CD8-positive, alpha-beta memory T cell (primary cell): ENCODE measurements at regions of chr14 and their contacts with region 1.

Region 1: DNA sequence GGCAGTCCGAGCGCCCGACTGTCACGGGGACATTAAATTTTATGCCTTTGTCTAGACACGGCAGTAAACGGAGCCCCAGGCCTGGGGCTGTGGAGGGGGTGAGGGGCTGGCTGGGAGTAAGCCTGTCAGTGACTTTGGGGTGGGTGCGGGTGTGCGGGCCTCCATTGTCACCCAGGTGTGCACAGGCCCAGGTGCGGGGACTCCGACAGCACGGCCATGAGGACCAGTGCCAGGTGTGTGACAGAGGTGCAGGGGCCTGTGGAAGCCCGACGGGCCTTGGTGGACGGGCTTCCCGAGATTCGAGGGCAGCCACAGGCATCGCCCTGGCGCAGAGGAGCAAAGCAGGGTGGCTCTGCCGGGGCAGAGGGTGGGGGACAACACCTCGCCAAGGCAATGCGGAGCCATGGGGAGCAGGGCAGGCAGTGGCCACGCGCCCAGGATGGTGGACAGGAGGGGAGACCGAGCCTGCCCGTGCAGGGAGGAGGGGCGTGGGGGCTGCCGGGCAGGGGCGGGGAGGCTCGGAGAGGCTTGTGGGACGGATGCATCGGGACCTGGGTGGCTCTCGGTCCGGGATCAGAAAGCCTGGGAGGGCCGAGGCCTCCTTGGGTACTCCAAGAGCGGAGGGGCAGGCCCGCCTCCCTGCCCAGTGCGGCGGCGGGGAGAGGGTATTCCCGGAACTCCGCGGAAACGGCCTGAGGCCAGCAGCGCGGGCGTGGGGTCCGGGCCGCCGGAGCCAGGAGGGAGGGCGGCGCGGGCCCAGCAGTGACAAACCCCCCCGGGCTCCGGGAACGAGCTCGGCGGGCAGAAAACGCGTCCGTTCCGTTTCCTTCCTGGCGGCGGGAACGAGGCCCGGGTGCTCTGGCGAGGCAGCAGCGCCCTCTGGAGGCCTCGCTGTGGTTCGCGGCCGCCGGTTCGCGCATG is 1.5 kb downstream of the TMEM121 start:
- DNase-seq: peak; percentile 71 to 83 (median 73)
- H3K4me3 ChIP-seq: peak overlapping the region; percentile 32
- H3K4me3 Mint-ChIP-seq: peak overlapping the region; percentile 56 to 82 (median 69)
- H3K27ac ChIP-seq: no peak overlapping the region
- H3K27ac Mint-ChIP-seq: peak overlapping the region in 1 of 8 donors; percentile 60
- H3K4me1 ChIP-seq: peaks cover 26% of the 10 kb centered on the region
- H3K4me1 Mint-ChIP-seq: peaks cover 4 to 38% (median 7%) of the 10 kb centered on the region in 3 donors
- H3K27me3 ChIP-seq: peaks cover 17% of the 10 kb centered on the region
- H3K27me3 Mint-ChIP-seq: peaks cover 15 to 18% of the 10 kb centered on the region in 2 donors

Region 2: DNA sequence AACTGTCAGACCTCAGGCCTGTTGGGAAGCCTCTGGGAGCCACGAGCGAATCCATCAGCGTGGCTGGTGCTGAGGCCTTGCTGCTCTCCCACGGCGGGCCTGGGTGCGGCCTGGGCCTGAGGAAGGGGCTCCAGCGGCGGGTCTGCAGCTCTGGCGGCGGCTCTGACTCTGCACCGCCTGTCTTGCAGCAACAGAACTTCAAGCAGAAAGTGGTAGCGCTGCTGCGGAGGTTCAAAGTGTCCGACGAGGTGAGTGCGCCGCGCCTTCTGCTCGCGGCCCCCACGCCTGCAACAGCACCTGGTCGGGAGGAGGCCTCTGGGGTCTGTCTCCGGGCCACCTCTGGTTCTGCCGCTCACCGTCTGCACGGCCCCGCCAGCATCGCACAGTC is 158.3 kb before region 1 on chr14:
- CTCF ChIA-PET with region 1: interaction called, 16 read pairs
- POLR2A ChIA-PET with region 1: no interaction called
- DNase-seq: no peak
- H3K4me3 ChIP-seq: no peak overlapping the region
- H3K4me3 Mint-ChIP-seq: no peak overlapping the region
- H3K27ac ChIP-seq: no peak overlapping the region
- H3K27ac Mint-ChIP-seq: no peak overlapping the region
- H3K4me1 ChIP-seq: peaks cover 14% of the 10 kb centered on the region
- H3K4me1 Mint-ChIP-seq: peaks cover 3 to 5% (median 5%) of the 10 kb centered on the region in 3 donors
- H3K27me3 ChIP-seq: no peaks in the 10 kb centered on the region
- H3K27me3 Mint-ChIP-seq: no peaks in the 10 kb centered on the region